Activated CD8-positive, alpha-beta T cell treated with anti-CD3 and anti-CD28 coated beads for 36 hours (primary cell): ENCODE measurements at regions of chr1 and their contacts with region 1.

Region 1: DNA sequence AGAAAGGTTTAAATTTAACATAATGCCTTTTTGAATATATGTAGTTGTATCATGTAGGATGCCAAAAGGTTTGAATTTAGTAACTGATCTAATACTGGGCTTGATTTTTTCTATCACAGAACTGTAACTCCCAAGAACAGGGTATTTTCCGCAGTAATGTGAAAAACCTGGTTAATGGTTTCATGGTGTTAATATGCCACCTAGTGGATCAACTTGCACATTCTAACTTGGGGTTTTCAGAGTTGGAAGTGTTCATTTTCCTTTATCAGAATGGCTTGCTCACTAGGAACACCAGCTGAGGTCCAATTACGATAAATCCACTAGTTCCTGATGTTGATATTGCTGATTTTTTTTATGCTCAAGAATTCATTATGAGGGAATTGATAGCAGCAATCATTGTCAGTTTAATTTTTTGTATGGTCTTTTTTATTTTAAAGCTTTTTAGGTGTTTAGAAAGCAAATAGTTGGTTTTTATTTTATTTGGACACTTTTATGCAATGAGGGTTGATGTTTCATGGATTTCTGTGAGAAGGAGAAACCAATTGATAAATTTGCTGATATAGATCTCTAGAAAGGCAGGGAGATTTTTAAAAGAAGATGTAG is 157.2 kb downstream of the PLA2G4A start:
- DNase-seq: no peak
- ATAC-seq: no peak
- H3K4me3 Mint-ChIP-seq: no peak overlapping the region
- H3K27ac Mint-ChIP-seq: no peak overlapping the region
- H3K4me1 Mint-ChIP-seq: no peaks in the 10 kb centered on the region
- H3K27me3 Mint-ChIP-seq: peaks cover 1% of the 10 kb centered on the region
- CTCF ChIP-seq: peak; percentile 67

Region 2: GRCh38 chr1:186404454-186405051 is 581.4 kb before region 1 on chr1:
- CTCF ChIA-PET with region 1: interaction called, 11 read pairs
- POLR2A ChIA-PET with region 1: no interaction called
- intact Hi-C with region 1: no loop called
- DNase-seq: no peak
- ATAC-seq: peak; percentile 86
- H3K4me3 Mint-ChIP-seq: no peak overlapping the region
- H3K27ac Mint-ChIP-seq: no peak overlapping the region
- H3K4me1 Mint-ChIP-seq: no peaks in the 10 kb centered on the region
- H3K27me3 Mint-ChIP-seq: no peaks in the 10 kb centered on the region
- CTCF ChIP-seq: peak; percentile 77

Region 3: GRCh38 chr1:186482661-186483255 is 503.2 kb before region 1 on chr1:
- CTCF ChIA-PET with region 1: interaction called, 9 read pairs
- POLR2A ChIA-PET with region 1: no interaction called
- intact Hi-C with region 1: loop called (anchors 5 kb)
- DNase-seq: peak; percentile 78
- ATAC-seq: peak; percentile 75
- H3K4me3 Mint-ChIP-seq: no peak overlapping the region
- H3K27ac Mint-ChIP-seq: no peak overlapping the region
- H3K4me1 Mint-ChIP-seq: no peaks in the 10 kb centered on the region
- H3K27me3 Mint-ChIP-seq: no peaks in the 10 kb centered on the region
- CTCF ChIP-seq: peak; percentile 97

Region 4: DNA sequence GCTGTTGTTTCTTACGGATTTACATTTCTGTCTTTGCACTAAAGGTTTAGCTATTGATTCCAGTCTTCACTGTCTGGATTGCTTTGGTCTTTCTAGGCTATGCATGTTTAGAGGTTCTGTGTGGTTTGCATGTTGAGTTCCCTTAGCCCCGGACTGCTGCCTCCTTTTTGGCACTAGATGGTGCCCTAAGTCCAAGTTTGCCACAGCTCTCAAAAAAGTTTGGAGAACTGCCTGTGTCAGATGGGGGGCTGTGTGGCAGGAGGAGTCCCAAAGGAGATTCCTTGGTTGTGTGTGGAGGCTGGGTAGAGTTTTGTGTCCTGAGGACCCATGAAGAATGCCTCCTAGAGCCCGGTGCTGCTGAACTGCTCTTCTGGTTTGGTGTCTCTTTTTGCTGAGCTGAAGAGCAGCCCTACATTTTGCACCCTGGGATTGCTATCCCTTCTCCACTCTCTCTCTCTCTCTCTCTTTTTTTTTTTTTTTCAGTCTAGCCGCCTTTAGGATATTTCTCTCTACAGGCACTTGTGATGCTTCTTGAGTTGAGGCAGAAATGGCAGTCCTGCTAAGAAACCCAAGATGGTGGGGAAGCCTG is 380.1 kb before region 1 on chr1:
- CTCF ChIA-PET with region 1: interaction called, 21 read pairs
- POLR2A ChIA-PET with region 1: no interaction called
- intact Hi-C with region 1: loop called (anchors 2 kb)
- DNase-seq: peak; percentile 46
- ATAC-seq: no peak
- H3K4me3 Mint-ChIP-seq: no peak overlapping the region
- H3K27ac Mint-ChIP-seq: no peak overlapping the region
- H3K4me1 Mint-ChIP-seq: no peaks in the 10 kb centered on the region
- H3K27me3 Mint-ChIP-seq: peaks cover 23% of the 10 kb centered on the region
- CTCF ChIP-seq: peak; percentile 46

Region 5: DNA sequence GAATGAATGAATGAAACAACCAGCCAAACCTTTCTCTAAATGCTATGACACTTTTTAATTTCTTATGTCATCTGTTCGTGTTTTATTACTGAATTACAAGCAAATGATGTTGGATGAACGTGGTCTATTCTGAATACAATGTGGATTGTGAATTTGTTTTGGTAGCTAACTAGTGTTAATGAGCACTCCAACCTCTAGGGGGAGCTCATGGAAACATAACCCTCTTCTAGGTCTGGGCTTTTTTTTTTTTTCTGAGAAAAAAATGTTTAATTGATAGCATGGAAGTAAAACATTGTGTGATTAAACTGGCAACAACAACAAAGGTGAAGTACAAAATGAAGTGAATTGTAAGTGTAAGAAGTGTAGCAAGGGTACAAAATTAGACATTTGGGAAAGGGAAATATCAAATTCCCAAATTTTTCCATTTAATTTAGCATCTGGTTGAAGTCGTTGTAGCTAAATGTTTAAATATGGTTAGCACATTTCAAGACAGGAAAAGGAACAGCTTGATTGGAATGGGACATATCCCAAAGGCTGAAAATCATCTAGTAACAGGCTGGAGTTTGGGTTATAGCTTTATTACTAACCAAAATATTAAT is 263.2 kb before region 1 on chr1:
- CTCF ChIA-PET with region 1: interaction called, 7 read pairs
- POLR2A ChIA-PET with region 1: no interaction called
- intact Hi-C with region 1: loop called (anchors 10 kb)
- DNase-seq: peak; percentile 39
- ATAC-seq: peak; percentile 42
- H3K4me3 Mint-ChIP-seq: no peak overlapping the region
- H3K27ac Mint-ChIP-seq: no peak overlapping the region
- H3K4me1 Mint-ChIP-seq: no peaks in the 10 kb centered on the region
- H3K27me3 Mint-ChIP-seq: no peaks in the 10 kb centered on the region
- CTCF ChIP-seq: peak; percentile 66

Region 6: GRCh38 chr1:186967656-186968394 is 18.2 kb before region 1 on chr1:
- CTCF ChIA-PET with region 1: no interaction called
- POLR2A ChIA-PET with region 1: no interaction called
- intact Hi-C with region 1: no loop called
- DNase-seq: no peak
- ATAC-seq: no peak
- H3K4me3 Mint-ChIP-seq: no peak overlapping the region
- H3K27ac Mint-ChIP-seq: no peak overlapping the region
- H3K4me1 Mint-ChIP-seq: no peaks in the 10 kb centered on the region
- H3K27me3 Mint-ChIP-seq: no peaks in the 10 kb centered on the region
- CTCF ChIP-seq: no peak